Activated CD4-positive, alpha-beta memory T cell treated with anti-CD3 and anti-CD28 coated beads, Interleukin-2, amount 10 ng/mL, durations not matched to agents 7 days and 5 days (primary cell): ENCODE measurements at regions of chr20 and their contacts with region 1.

Region 1: GRCh38 chr20:21102603-21103311 is 3.4 kb downstream of the LINC00237 start:
- DNase-seq: peak; percentile 53
- H3K4me3 Mint-ChIP-seq: peak overlapping the region; percentile 70
- H3K27ac Mint-ChIP-seq: no peak overlapping the region
- H3K4me1 Mint-ChIP-seq: peaks cover 45% of the 10 kb centered on the region
- H3K27me3 Mint-ChIP-seq: peaks cover 82% of the 10 kb centered on the region

Region 2: GRCh38 chr20:21063276-21063675 is 39.5 kb before region 1 on chr20:
- CTCF ChIA-PET with region 1: no interaction called
- POLR2A ChIA-PET with region 1: no interaction called
- DNase-seq: no peak
- H3K4me3 Mint-ChIP-seq: no peak overlapping the region
- H3K27ac Mint-ChIP-seq: no peak overlapping the region
- H3K4me1 Mint-ChIP-seq: no peaks in the 10 kb centered on the region
- H3K27me3 Mint-ChIP-seq: peaks cover 26% of the 10 kb centered on the region

Region 3: DNA sequence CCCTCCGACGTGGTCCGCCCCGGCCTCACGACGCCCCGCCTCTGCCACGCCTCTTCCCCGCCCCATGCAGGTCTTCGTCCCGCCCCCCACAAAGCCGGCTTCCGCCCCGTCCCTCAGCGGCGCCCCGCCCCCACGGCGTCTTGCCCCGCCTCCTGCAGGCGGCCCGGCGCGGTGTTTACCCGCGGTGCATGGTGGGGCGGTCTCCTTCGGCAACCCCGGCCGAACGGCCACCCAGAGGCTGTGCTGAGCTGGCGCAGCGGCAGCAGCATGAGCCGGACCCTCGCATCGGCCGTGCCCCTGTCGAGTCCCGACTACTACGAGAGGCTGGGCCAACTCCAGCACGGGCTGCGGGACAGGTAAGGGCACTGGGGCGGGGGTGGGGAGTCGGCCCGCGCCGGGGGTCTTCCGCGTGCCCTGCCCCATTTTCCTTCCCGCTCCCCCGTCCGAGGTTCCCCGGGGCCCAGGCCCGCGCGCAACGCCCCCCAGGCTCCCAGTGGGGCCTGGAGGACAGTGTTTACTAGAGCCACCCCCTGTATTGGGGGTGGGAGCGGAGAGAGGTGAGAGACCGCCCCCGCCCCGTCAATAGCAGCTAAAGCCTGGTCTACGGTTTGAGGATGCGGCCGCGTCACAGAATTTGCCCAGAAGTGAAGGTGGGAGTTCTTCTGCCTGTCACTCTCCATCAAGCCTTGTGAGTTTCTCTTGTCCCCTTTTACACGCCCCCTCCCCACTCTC is 23.3 kb after region 1 on chr20 and contains the start of gene KIZ:
- CTCF ChIA-PET with region 1: interaction called, 3 read pairs
- POLR2A ChIA-PET with region 1: interaction called, 13 read pairs
- DNase-seq: peak; percentile 97
- H3K4me3 Mint-ChIP-seq: peak within 1 kb of the TSS; percentile 88
- H3K27ac Mint-ChIP-seq: peak within 1 kb of the TSS; percentile 64
- H3K4me1 Mint-ChIP-seq: peaks cover 31% of the 10 kb centered on the region
- H3K27me3 Mint-ChIP-seq: peaks cover 1% of the 10 kb centered on the region
- total RNA-seq, gene KIZ: 17.3 to 22.1 TPM